ENCODE measurements at regions of chr9 and their contacts with region 1.

Region 1: GRCh38 chr9:98010445-98010844 is 27.3 kb downstream of the ANP32B start:
- DNase-seq: peak; percentile 40
- H3K4me3 Mint-ChIP-seq: no peak overlapping the region
- H3K27ac Mint-ChIP-seq: peak overlapping the region; percentile 10
- H3K4me1 Mint-ChIP-seq: peaks cover 6% of the 10 kb centered on the region
- H3K27me3 Mint-ChIP-seq: no peaks in the 10 kb centered on the region
- CTCF ChIP-seq: no peak

Region 2: GRCh38 chr9:97990266-97990665 is 20.2 kb before region 1 on chr9:
- CTCF ChIA-PET with region 1: interaction called, 5 read pairs
- POLR2A ChIA-PET with region 1: interaction called, 3 read pairs
- intact Hi-C with region 1: loop called (anchors 1 kb)
- DNase-seq: peak; percentile 60
- H3K4me3 Mint-ChIP-seq: peak overlapping the region; percentile 26
- H3K27ac Mint-ChIP-seq: peak overlapping the region; percentile 30
- H3K4me1 Mint-ChIP-seq: peaks cover 30% of the 10 kb centered on the region
- H3K27me3 Mint-ChIP-seq: no peaks in the 10 kb centered on the region
- CTCF ChIP-seq: no peak

Measured in MCF 10A (cell line).